Activated CD4-positive, alpha-beta T cell treated with anti-CD3 and anti-CD28 coated beads, Interleukin-2, amount 10 ng/mL, durations not matched to agents 24 days and 14 days (primary cell): ENCODE measurements at regions of chr17 and their contacts with region 1.

Region 1: DNA sequence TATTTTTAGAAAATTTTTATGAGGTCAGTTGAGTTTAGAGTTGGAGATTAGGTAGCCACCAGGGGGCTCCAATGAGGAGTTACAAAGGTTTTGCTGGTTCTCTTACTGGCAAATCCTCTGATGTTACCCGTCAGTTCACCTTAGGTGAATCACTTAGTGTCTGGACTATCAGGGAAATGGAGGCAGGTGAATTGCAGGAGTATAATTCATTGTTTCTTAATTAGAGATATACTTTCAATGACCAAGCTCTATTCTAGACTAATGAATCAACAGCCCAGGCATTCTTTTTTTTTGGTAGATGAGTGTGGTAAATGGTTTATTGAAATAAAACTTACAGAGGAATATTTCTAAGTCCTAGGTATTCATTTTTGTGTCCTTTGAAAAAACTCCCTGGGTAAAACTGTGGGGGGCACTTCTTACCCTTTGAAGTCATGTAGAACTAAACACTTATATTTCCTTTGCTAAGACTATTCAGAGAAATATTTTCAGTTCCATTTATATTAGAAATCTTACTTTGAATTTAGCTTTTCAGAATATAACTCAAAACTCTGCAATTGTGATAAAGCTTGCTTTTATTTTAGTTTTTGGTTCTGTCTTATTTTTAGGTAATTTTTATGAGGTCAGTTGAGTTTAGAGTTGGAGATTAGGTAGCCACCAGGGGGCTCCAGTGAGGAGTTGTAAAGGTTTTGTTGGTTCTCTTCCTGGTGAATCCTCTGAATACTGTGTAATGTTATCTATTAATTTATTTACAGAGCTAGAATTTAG is 17.7 kb downstream of the PSMD11 start:
- DNase-seq: peak; percentile 88
- H3K4me3 Mint-ChIP-seq: no peak overlapping the region
- H3K27ac Mint-ChIP-seq: no peak overlapping the region
- H3K4me1 Mint-ChIP-seq: peaks cover 29% of the 10 kb centered on the region
- H3K27me3 Mint-ChIP-seq: no peaks in the 10 kb centered on the region

Region 2: DNA sequence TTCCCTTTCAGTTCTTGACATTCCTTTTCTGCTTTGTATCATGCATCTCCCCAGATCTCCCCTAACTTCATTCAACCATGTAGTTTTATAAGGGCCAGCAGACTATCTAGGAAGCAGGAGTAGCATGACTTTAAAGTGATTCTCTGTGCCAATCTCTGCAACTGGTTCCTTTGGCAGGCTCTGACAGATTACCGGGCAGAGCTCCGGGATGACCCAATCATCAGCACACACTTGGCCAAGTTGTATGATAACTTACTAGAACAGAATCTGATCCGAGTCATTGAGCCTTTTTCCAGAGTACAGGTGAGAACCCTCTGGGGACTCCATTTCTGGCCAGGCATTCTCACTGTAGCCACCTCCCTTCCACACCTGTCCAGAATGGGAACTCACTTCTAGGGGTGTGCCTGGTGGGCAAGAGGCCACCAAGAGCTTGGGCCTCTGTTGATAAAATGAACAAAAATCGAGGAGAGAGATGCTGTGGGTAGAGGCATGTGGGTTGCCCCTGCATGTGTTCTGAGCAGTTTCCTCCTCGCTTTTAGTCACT is 17.1 kb after region 1 on chr17:
- intact Hi-C with region 1: no loop called
- DNase-seq: no peak
- H3K4me3 Mint-ChIP-seq: no peak overlapping the region
- H3K27ac Mint-ChIP-seq: peak overlapping the region; percentile 3
- H3K4me1 Mint-ChIP-seq: peaks cover 3% of the 10 kb centered on the region
- H3K27me3 Mint-ChIP-seq: no peaks in the 10 kb centered on the region

Region 3: GRCh38 chr17:32609085-32609484 is 147.1 kb after region 1 on chr17:
- intact Hi-C with region 1: loop called (anchors 1 kb)
- DNase-seq: peak; percentile 88
- H3K4me3 Mint-ChIP-seq: no peak overlapping the region
- H3K27ac Mint-ChIP-seq: no peak overlapping the region
- H3K4me1 Mint-ChIP-seq: peaks cover 6% of the 10 kb centered on the region
- H3K27me3 Mint-ChIP-seq: peaks cover 3% of the 10 kb centered on the region

Region 4: DNA sequence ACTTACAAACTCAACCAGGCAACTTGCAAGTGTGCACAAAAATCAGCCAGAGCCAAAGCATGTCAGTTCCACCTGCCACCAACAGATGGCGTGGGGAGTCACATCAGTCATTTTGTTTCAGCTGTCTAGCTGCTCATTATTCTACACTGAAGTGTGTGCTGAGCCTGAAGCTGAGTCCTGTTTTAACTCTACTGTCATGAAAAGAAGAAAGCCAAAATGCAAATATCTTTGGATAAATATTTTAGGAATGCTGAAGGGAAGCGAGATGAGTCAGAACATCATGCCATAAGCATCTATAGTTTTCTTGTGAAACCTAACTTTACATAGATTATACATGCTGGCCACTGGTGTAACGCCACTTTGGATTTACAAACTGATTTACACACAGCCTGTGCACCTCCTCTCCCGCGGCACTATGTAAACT is 197.4 kb after region 1 on chr17:
- intact Hi-C with region 1: loop called (anchors 1 kb)
- DNase-seq: peak; percentile 89
- H3K4me3 Mint-ChIP-seq: no peak overlapping the region
- H3K27ac Mint-ChIP-seq: no peak overlapping the region
- H3K4me1 Mint-ChIP-seq: no peaks in the 10 kb centered on the region
- H3K27me3 Mint-ChIP-seq: peaks cover 8% of the 10 kb centered on the region